Thyroid gland (tissue), 4 donors: ENCODE measurements at regions of chr10 and their contacts with region 1.

Region 1: DNA sequence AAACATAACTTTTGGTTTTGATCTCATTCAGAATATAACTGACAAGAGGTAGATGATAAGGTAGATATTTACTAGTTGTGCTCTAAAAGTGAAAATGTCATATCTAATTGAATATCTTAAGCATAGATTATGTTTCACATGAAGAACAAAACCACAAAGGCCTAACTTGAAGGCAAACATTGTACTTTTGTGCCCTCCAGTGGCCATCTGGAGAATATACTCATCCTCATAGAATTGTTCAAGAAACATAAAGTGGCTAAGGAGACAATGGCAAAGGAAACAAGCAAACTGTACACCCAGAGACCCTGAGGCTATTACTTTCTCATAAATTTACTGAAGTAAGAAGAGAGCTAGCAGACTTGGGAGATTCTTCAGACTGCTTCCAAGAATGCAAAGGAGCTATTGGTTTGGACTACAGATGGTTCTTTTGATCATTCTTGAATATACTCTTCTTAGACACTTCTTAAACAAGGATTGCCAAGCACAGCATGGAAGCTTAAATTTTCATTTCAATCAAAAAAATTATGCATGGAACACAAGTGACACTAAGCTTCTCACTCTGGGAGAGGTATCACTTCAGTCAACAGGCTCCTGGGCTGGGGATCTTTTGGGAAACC is 98.2 kb upstream of the DKK1 start:
- DNase-seq: peak; percentile 30 to 36
- H3K4me3 ChIP-seq: no peak overlapping the region
- H3K27ac ChIP-seq: no peak overlapping the region
- H3K4me1 ChIP-seq: no peaks in the 10 kb centered on the region
- H3K27me3 ChIP-seq: no peaks in the 10 kb centered on the region
- CTCF ChIP-seq: peak; percentile 36 to 88 (median 67)
- POLR2A ChIP-seq: no peak

Region 2: GRCh38 chr10:51007781-51008180 is 1208.1 kb before region 1 on chr10:
- intact Hi-C with region 1: loop called (anchors 5 kb)
- DNase-seq: no peak
- H3K4me3 ChIP-seq: no peak overlapping the region
- H3K27ac ChIP-seq: no peak overlapping the region
- H3K4me1 ChIP-seq: no peaks in the 10 kb centered on the region
- H3K27me3 ChIP-seq: no peaks in the 10 kb centered on the region
- CTCF ChIP-seq: no peak
- POLR2A ChIP-seq: no peak

Region 3: DNA sequence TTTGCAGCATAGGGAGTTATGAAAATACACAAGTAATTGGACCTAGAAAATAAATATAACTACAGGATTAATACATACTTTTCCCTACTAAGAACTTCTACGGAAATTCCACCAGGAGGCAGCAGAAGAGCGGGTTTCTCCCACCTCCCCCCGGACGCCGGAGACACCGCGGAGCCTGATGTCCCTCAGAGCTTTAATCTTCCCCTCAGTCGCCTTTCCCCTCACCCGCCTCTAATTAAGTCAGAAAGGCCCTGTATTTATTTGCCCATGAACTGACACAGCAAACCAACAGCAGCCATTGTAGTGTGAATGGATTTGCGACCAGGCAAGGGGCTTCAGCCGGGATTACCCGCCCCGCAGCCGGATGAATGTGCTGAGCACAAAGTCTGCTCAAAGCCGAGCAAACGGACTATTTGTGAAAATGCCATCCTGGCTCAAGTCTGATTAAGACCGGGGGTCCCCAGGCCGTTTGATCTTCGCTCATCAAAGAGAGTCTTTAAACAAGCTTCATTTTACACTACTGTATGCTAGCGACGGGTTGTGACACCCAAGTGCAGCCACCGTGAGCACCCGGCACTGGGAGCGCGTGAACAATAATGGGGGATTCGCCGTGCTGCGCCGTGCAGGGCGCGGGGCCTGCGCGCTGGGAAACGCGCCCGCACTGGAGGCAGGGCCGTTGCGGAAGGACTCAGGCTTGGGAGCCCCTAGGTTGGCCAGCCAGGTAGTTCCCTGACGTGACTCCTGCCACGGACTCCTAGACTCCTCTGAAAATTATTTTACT is 92.6 kb after region 1 on chr10:
- intact Hi-C with region 1: no loop called
- DNase-seq: peak; percentile 43 to 51
- H3K4me3 ChIP-seq: peak overlapping the region in 2 of 3 donors; percentile 36 to 43
- H3K27ac ChIP-seq: no peak overlapping the region
- H3K4me1 ChIP-seq: peaks cover 0 to 12% of the 10 kb centered on the region in 2 donors
- H3K27me3 ChIP-seq: no peaks in the 10 kb centered on the region
- CTCF ChIP-seq: peak in 4 of 6 experiments; percentile 42 to 68 (median 67)
- POLR2A ChIP-seq: no peak